ENCODE measurements at regions of chr3 and their contacts with region 1.

Region 1: GRCh38 chr3:195692354-195692685 is 28.5 kb upstream of the MUC20 start:
- DNase-seq: no peak
- H3K4me3 ChIP-seq: no peak overlapping the region
- H3K27ac ChIP-seq: no peak overlapping the region
- H3K4me1 ChIP-seq: no peaks in the 10 kb centered on the region
- CTCF ChIP-seq: no peak

Region 2: DNA sequence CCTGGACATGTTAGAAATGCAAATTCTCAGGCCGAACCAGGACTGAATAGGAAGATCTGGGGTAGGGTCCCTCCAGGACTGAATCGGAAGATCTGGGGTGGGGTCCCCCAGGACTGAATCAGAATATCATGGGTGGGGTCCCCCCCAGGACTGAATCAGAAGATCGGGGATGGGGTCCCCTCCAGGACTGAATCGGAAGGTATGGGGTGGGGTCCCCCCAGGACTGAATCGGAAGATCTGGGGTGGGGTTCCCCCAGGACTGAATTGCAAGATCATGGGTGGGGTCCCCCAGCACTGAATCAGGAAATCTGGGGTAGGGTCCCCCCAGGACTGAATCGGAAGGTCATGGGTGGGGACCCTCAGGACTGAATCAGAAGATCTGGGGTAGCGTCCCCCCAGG is 264.3 kb after region 1 on chr3:
- CTCF ChIA-PET with region 1: no interaction called
- POLR2A ChIA-PET with region 1: no interaction called
- intact Hi-C with region 1: loop called (anchors 5 kb)
- DNase-seq: no peak
- H3K4me3 ChIP-seq: no peak overlapping the region
- H3K27ac ChIP-seq: no peak overlapping the region
- H3K4me1 ChIP-seq: peaks cover 4% of the 10 kb centered on the region
- CTCF ChIP-seq: no peak